ENCODE measurements at regions of chr3 and their contacts with region 1.

Region 1: GRCh38 chr3:25664810-25665314 is at the start of gene TOP2B:
- DNase-seq: peak; percentile 90 to 97
- H3K4me3 ChIP-seq: peak within 1 kb of the TSS; percentile 82 to 90
- H3K27ac ChIP-seq: peak within 1 kb of the TSS; percentile 94 to 97
- H3K4me1 ChIP-seq: peaks cover 0 to 23% of the 10 kb centered on the region in 2 donors
- H3K27me3 ChIP-seq: no peaks in the 10 kb centered on the region
- CTCF ChIP-seq: no peak
- total RNA-seq, gene TOP2B: 20.0 TPM

Region 2: DNA sequence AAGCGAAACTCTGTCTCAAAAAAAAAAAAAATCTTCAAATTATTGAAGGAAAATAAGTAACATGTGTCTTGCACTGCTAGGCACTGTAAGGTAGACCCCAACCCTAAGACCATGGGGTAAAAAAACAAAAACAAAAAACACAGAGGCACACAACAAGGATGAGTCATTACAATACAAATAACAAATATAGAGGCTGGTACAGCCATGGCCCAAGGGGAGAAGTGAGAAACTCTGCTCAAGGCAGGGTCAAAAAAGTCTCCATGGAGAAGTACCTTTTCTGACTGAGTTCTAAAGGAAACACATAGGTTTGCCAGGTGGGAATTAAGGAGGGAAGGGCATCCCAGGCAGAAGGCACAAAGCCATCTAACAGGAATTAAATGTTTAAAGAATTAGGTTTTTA is 54.7 kb before region 1 on chr3:
- intact Hi-C with region 1: no loop called
- DNase-seq: no peak
- H3K4me3 ChIP-seq: no peak overlapping the region
- H3K27ac ChIP-seq: no peak overlapping the region
- H3K4me1 ChIP-seq: no peaks in the 10 kb centered on the region
- H3K27me3 ChIP-seq: no peaks in the 10 kb centered on the region
- CTCF ChIP-seq: no peak

Region 3: DNA sequence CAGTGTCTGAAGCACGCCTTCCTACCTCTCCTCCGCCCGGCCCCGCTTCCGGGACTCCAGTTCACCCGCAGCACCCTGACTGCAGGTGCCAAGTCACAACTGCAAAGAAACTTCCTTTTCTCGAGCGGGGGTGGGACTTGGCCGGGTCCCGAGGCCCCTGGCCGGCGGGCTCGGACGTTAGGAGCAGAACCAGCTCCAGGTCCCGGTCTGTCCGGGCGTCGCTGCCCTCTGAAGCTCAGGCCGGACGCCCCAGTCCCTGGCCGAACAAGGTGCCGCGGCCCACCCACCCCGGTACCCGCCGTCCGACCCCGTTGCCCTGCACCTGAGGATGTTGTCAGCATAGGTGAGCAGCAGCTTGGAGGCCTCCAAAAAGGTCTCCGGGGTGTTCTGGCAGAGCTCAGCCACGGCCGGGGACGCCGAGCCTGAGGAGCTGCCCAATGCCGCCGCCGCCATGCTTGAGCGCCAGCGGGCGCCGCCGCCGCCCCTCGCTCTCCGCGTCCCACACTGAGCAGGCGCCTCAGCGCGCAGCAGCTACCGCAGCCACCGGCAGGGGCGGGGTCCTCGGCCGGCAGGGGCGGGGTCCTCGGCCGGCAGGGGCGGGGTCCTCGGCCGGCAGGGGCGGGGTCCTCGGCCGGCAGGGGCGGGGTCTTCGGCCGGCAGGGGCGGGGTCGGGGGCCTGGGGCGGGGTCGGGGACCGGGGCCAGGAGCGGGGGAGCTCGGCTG is 118.2 kb after region 1 on chr3 and contains the start of gene NGLY1:
- intact Hi-C with region 1: loop called (anchors 2 kb)
- DNase-seq: peak; percentile 41 to 90
- H3K4me3 ChIP-seq: peak within 1 kb of the TSS; percentile 85 to 88
- H3K27ac ChIP-seq: peak within 1 kb of the TSS; percentile 83 to 89
- H3K4me1 ChIP-seq: peaks cover 0 to 6% of the 10 kb centered on the region in 2 donors
- H3K27me3 ChIP-seq: no peaks in the 10 kb centered on the region
- CTCF ChIP-seq: peak in 1 of 3 experiments; percentile 6
- total RNA-seq, gene NGLY1: 16.3 TPM

Region 4: DNA sequence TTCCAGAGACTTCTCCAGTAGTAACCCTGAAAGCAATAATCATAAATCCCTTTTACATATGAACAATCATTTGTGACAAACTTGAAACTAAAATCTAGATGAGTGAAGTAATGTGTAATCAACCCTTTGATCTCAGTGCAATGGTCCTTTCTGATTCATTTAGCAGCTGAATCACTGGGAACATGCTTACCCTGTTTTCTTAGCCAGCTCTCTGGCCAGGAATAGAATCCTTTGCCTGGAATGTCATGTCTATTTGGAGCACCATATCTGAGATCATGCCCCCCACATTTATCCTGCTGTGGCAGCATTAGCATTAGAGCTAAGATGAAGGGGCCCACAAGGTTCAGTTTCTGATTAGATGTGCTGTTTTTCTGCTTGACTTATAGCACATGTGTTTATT is 434.8 kb after region 1 on chr3:
- intact Hi-C with region 1: loop called (anchors 10 kb)
- DNase-seq: peak in 1 of 2 donors; percentile 65
- H3K4me3 ChIP-seq: no peak overlapping the region
- H3K27ac ChIP-seq: peak overlapping the region in 1 of 2 donors; percentile 67
- H3K4me1 ChIP-seq: peaks cover 0 to 4% of the 10 kb centered on the region in 2 donors
- H3K27me3 ChIP-seq: no peaks in the 10 kb centered on the region
- CTCF ChIP-seq: no peak

Region 5: DNA sequence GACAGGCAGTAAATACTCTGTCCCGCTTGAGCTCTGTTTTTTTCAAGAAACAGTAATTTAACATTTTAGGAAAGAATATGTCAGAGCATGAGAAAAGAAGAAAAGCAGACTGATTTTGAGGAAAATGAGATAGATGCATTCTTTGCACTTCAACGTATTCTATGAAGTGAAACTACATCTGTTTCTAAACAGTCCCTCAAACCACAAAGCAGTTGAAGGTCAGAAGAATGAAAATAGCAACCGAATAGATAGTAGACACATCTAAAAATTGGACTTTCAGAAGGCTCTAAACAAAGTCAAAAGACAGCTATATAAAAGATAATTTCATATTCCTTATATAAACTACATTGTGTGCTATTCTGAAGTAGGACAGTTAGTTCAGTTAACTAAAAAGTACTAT is 785.1 kb after region 1 on chr3:
- intact Hi-C with region 1: no loop called
- DNase-seq: no peak
- H3K4me3 ChIP-seq: no peak overlapping the region
- H3K27ac ChIP-seq: no peak overlapping the region
- H3K4me1 ChIP-seq: no peaks in the 10 kb centered on the region
- H3K27me3 ChIP-seq: no peaks in the 10 kb centered on the region
- CTCF ChIP-seq: no peak

Measured in ascending aorta (tissue), 2 donors.